Activated CD8-positive, alpha-beta T cell treated with anti-CD3 and anti-CD28 coated beads, Interleukin-2, amount 10 ng/mL, durations not matched to agents 7 days and 5 days (primary cell): ENCODE measurements at regions of chr14 and their contacts with region 1.

Region 1: DNA sequence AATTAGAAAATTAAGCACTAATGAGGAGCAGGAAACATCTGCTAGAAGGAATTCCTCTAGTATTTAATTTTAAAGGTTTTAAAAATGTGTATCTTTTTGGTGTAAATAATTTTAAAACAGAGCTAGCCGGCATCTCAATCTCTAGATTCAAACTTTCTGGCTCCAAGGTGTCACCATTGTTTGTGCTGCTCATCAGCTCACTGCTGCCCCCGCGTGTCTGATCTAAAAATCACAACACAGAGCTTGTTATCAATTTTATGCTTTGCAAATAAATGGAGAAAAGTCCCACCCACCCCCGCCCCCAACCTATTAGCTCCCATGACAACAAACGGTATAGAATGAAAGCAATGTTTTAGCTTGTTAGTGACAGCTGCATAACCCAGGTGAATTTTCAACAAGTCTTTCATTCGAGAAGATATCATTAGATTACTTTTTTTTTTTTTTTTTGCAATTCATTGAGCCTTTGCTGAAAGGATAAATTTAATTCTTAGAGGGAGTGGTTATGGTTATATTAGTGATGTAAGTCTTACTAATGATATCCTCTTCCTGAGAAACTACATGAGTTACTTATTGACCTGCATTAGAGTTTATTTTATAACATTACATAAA is 11.3 kb upstream of the ABHD12B start:
- DNase-seq: peak; percentile 93
- ATAC-seq: peak; percentile 67
- H3K4me3 Mint-ChIP-seq: peak overlapping the region; percentile 84
- H3K27ac Mint-ChIP-seq: peak overlapping the region; percentile 88
- H3K4me1 Mint-ChIP-seq: peaks cover 18% of the 10 kb centered on the region
- H3K27me3 Mint-ChIP-seq: peaks cover 14% of the 10 kb centered on the region

Region 2: DNA sequence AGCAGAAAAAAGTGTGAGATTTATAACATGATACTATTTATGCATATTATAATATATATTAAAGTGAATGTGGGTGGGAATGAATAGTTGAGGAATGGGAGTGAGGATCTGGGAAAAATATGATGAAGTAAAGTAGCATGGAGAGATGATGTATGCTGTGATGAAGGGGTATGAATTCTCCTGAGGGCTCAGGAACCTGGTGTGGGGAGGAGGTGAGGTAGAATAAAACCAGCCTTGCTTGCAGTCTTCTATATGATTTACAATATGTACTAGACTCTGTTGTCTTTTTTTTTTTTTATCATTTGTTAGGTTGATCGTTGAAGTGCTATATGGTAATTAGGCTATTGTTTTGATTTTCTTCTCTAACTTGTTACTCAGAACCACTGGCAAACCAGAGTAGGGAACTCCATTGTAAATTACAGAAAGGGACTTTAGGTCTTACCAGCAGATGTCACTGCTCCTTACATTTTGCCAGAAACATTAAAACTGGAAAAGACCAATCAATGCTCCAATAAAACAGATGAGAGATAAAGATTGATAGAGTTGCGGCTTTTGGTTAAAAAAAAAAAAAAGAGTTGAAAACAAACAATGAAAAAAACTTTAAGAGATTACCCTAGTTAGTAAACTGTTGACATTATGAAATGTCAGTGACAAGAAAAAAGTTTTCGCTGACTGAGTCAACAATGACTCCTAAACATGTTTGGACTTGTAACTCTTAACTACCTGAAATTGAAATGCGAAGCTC is 260.7 kb before region 1 on chr14:
- CTCF ChIA-PET with region 1: interaction called, 17 read pairs
- POLR2A ChIA-PET with region 1: no interaction called
- DNase-seq: no peak
- ATAC-seq: no peak
- H3K4me3 Mint-ChIP-seq: no peak overlapping the region
- H3K27ac Mint-ChIP-seq: no peak overlapping the region
- H3K4me1 Mint-ChIP-seq: no peaks in the 10 kb centered on the region
- H3K27me3 Mint-ChIP-seq: peaks cover 2% of the 10 kb centered on the region

Region 3: GRCh38 chr14:50736932-50737419 is 123.6 kb before region 1 on chr14:
- CTCF ChIA-PET with region 1: interaction called, 21 read pairs
- POLR2A ChIA-PET with region 1: interaction called, 3 read pairs
- DNase-seq: peak; percentile 35
- ATAC-seq: peak; percentile 71
- H3K4me3 Mint-ChIP-seq: no peak overlapping the region
- H3K27ac Mint-ChIP-seq: peak overlapping the region; percentile 72
- H3K4me1 Mint-ChIP-seq: peaks cover 36% of the 10 kb centered on the region
- H3K27me3 Mint-ChIP-seq: no peaks in the 10 kb centered on the region

Region 4: DNA sequence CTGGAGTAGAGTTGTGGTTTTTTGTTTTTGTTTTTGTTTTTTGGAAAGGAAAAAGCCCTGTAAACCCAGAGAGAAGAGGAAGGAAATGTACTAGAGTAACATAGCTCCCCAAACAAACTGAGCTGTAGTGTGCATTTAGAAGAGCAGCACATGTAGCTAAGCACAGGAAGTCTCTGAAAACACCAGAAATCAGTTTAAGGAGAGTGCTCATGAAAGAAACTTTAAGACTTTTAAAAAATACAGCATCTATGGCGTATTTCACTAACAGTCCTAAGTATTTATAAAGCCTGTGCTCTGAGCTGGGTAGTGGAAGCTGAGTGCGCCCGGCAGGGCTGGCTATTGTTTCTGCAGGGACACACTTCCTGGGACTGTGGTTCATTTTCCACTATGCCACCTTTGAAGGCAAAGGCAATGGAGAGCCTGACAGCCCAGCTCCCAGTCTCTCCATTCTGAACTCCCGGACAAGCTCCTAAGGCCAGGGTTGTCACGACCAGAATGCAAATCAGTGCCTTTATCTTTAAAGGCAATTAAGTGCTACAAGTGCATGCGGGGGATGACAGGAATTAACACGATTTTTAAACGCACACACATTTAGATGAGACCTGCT is 75.0 kb before region 1 on chr14:
- CTCF ChIA-PET with region 1: interaction called, 158 read pairs
- POLR2A ChIA-PET with region 1: interaction called, 14 read pairs
- DNase-seq: no peak
- ATAC-seq: peak; percentile 63
- H3K4me3 Mint-ChIP-seq: no peak overlapping the region
- H3K27ac Mint-ChIP-seq: peak overlapping the region; percentile 79
- H3K4me1 Mint-ChIP-seq: peaks cover 60% of the 10 kb centered on the region
- H3K27me3 Mint-ChIP-seq: no peaks in the 10 kb centered on the region

Region 5: DNA sequence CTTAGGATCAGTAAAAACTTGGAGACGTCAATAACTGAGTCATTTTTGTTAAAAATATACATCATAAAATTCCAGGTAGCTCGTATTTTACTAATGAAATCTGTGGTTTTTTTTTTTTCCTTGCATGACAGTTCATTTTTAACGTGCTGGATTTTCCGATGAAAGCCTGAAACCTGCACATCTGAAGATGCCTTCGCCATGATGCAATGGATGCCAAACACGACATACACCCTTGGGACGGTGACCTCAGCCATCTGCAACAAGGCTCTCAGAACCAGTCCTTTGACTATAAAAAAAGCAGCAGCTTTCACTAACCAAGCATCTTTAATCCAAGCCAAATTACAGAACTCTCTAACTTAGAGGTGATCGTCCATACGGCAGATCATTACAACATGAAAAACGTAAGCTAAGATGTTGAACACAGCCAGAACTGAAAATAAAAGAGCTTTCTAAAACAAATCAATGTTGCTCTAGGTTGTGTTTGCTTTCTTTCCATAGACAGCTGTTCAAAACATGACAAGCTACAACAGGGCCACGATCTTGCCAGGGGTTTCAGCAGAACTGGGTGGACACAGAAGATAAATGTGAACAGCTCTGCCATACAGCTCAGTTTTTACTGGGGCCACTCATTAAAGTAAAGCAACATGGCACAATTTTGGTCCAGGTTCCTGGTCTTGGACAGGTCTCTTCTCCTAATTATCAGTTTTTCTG is 37.4 kb before region 1 on chr14:
- CTCF ChIA-PET with region 1: interaction called, 204 read pairs
- POLR2A ChIA-PET with region 1: interaction called, 14 read pairs
- DNase-seq: no peak
- ATAC-seq: peak; percentile 21
- H3K4me3 Mint-ChIP-seq: peak overlapping the region; percentile 73
- H3K27ac Mint-ChIP-seq: peak overlapping the region; percentile 94
- H3K4me1 Mint-ChIP-seq: peaks cover 89% of the 10 kb centered on the region
- H3K27me3 Mint-ChIP-seq: no peaks in the 10 kb centered on the region

Region 6: GRCh38 chr14:50846226-50846880 is 14.2 kb before region 1 on chr14:
- CTCF ChIA-PET with region 1: interaction called, 13 read pairs
- POLR2A ChIA-PET with region 1: interaction called, 3 read pairs
- DNase-seq: no peak
- ATAC-seq: no peak
- H3K4me3 Mint-ChIP-seq: no peak overlapping the region
- H3K27ac Mint-ChIP-seq: no peak overlapping the region
- H3K4me1 Mint-ChIP-seq: peaks cover 14% of the 10 kb centered on the region
- H3K27me3 Mint-ChIP-seq: peaks cover 9% of the 10 kb centered on the region

Region 7: GRCh38 chr14:50892255-50892654 is 31.7 kb after region 1 on chr14:
- CTCF ChIA-PET with region 1: no interaction called
- POLR2A ChIA-PET with region 1: no interaction called
- DNase-seq: no peak
- ATAC-seq: no peak
- H3K4me3 Mint-ChIP-seq: no peak overlapping the region
- H3K27ac Mint-ChIP-seq: no peak overlapping the region
- H3K4me1 Mint-ChIP-seq: no peaks in the 10 kb centered on the region
- H3K27me3 Mint-ChIP-seq: peaks cover 12% of the 10 kb centered on the region

Region 8: GRCh38 chr14:50917449-50917848 is 56.9 kb after region 1 on chr14:
- CTCF ChIA-PET with region 1: no interaction called
- POLR2A ChIA-PET with region 1: no interaction called
- DNase-seq: no peak
- ATAC-seq: no peak
- H3K4me3 Mint-ChIP-seq: no peak overlapping the region
- H3K27ac Mint-ChIP-seq: no peak overlapping the region
- H3K4me1 Mint-ChIP-seq: no peaks in the 10 kb centered on the region
- H3K27me3 Mint-ChIP-seq: peaks cover 11% of the 10 kb centered on the region

Region 9: DNA sequence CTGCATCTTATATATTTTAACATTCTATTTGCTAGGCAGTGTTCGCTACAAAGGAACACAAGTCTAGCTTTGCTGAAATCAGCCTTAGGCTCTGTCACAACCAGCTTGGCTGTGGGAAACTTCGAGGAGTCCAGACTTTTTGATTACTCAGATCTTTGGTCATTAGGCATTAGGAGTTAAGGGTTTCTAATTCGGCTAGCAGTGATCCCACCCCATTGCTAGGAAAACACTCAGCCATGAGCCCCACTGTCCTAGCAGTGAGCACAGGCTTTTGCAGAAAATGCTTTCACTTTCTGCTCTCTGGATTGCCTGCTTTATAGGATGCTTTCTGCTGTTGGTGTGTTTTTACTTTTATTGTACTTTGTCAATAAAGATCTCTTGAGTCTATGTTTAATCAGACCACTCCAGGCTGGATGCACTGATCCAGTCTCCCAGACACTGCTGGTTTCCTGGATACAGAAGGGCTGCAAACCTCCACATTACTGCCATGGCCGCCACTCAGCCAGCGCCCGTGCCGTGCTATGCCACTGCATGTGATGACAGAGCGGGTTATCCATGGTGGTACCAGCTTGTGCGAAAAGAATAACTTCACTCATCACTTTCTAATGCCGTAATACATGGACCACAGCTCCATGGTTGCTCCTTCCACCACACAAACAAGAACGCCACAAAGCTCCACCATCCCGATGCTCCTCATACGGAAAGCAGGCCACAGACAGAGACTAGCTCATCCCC is 124.7 kb after region 1 on chr14:
- CTCF ChIA-PET with region 1: no interaction called
- POLR2A ChIA-PET with region 1: no interaction called
- DNase-seq: no peak
- ATAC-seq: no peak
- H3K4me3 Mint-ChIP-seq: no peak overlapping the region
- H3K27ac Mint-ChIP-seq: no peak overlapping the region
- H3K4me1 Mint-ChIP-seq: no peaks in the 10 kb centered on the region
- H3K27me3 Mint-ChIP-seq: peaks cover 6% of the 10 kb centered on the region